Aorta (tissue), 5 donors: ENCODE measurements at regions of chr7 and their contacts with region 1.

Region 1: GRCh38 chr7:101882595-101883564 is 65.5 kb downstream of the CUX1 start:
- DNase-seq: peak; percentile 91 to 92
- ATAC-seq: peak; percentile 93
- H3K4me3 ChIP-seq: no peak overlapping the region
- H3K27ac ChIP-seq: peak overlapping the region in 1 of 2 donors; percentile 90
- H3K4me1 ChIP-seq: peaks cover 0 to 2% of the 10 kb centered on the region in 2 donors
- H3K27me3 ChIP-seq: no peaks in the 10 kb centered on the region

Region 2: GRCh38 chr7:101705331-101705730 is 177.5 kb before region 1 on chr7:
- intact Hi-C with region 1: no loop called
- DNase-seq: no peak
- ATAC-seq: no peak
- H3K4me3 ChIP-seq: no peak overlapping the region
- H3K27ac ChIP-seq: no peak overlapping the region
- H3K4me1 ChIP-seq: no peaks in the 10 kb centered on the region
- H3K27me3 ChIP-seq: peaks cover 0 to 3% of the 10 kb centered on the region in 2 donors

Region 3: DNA sequence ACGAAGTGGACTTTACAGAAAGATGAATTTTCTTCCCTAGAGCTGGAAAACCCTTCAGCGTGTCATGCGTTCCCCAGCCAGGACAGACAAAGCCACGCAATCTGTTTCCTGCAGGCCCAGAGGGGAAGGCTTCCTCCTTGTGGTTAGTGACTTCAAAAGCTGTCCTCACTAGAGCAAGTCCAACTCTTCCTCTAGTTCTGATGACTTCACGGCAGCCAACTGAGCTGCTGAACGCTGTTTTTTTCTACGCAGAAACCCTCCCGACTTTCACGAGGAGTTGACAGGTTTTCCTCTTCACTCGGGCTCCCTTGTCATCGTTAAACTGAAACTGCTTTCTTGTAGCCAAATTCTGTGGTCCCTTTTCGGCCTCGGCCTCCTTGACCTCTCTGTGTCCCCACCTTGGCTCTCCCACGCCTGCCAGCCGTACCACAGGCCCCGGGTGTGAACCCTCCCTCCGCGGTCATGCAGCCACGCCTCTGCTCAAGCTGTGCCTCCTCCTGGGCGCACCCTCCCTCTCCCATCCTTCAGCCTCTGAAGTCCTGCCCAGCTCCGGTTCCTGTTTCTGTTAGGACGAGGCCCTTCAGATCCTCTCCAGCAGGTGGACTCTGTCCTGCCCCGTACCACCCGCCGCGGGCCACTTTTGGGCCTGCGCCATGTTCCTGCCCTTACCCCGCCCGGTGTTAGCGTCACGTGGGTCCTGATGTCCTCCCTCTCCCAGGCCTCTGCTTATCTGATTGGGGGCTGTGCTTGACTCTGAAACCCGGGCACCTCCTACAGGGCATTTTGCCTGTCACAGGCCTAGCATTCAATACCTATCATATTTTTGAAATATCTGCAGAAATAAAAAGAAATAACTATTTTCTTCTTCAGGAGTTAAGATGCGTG is 26.2 kb before region 1 on chr7:
- intact Hi-C with region 1: loop called in 1 of 2 experiments (anchors 2 kb)
- DNase-seq: peak; percentile 91 to 94
- ATAC-seq: peak; percentile 93
- H3K4me3 ChIP-seq: no peak overlapping the region
- H3K27ac ChIP-seq: peak overlapping the region in 1 of 2 donors; percentile 1
- H3K4me1 ChIP-seq: peaks cover 0 to 3% of the 10 kb centered on the region in 2 donors
- H3K27me3 ChIP-seq: no peaks in the 10 kb centered on the region

Region 4: DNA sequence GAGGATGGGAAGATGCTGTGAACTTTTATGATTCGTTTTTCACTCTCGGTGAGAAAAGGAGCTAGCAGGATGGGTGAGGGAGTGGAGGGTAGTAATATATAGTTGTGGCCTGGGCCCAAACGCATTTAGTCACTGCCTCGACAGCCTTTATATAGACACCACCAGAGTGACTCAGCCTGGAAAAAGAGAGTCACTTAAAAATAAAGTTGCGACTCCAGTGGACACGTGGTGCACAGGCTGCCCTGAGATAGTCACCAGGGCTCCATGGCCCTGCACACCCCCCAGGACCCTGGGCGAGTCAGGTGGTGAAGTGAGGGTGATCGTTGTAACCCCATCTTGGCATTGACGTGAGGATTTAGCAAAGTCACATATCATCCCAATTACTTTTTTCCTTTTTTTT is 41.3 kb after region 1 on chr7:
- intact Hi-C with region 1: loop called in 1 of 2 experiments (anchors 5 kb)
- DNase-seq: peak; percentile 77 to 85
- ATAC-seq: peak; percentile 86
- H3K4me3 ChIP-seq: no peak overlapping the region
- H3K27ac ChIP-seq: peak overlapping the region; percentile 18 to 98
- H3K4me1 ChIP-seq: no peaks in the 10 kb centered on the region
- H3K27me3 ChIP-seq: no peaks in the 10 kb centered on the region

Region 5: DNA sequence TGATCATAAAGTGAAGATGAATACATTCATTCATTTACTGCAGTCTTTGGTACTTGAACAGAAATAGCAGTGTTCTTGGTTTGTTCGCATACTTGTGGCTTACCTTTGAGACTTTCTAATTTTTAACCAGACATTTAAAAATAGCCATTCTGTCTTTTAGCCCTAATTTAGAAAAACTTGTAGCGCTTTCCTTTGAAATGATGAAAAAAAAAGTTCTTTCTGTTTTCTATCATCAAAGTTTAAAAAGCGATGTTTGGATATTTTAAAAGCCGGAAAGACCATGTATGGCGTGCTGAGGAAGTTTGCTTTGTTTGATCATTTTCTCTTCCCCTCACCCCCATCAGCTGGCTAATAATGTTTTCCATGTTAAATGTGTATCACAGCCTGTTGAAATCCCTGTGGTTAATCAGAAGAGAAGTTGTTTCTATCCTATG is 50.8 kb after region 1 on chr7:
- intact Hi-C with region 1: loop called in 1 of 2 experiments (anchors 5 kb)
- DNase-seq: peak in 1 of 2 donors; percentile 6
- ATAC-seq: no peak
- H3K4me3 ChIP-seq: no peak overlapping the region
- H3K27ac ChIP-seq: peak overlapping the region in 1 of 2 donors; percentile 23
- H3K4me1 ChIP-seq: peaks cover 4% of the 10 kb centered on the region in 2 donors
- H3K27me3 ChIP-seq: no peaks in the 10 kb centered on the region